ENCODE measurements at regions of chr6 and their contacts with region 1.

Region 1: GRCh38 chr6:151675746-151676416 is 131.6 kb upstream of the ESR1 start:
- DNase-seq: peak; percentile 74
- ATAC-seq: peak; percentile 79
- H3K4me3 Mint-ChIP-seq: no peak overlapping the region
- H3K27ac Mint-ChIP-seq: no peak overlapping the region
- H3K4me1 Mint-ChIP-seq: peaks cover 16% of the 10 kb centered on the region
- H3K27me3 Mint-ChIP-seq: no peaks in the 10 kb centered on the region

Region 2: DNA sequence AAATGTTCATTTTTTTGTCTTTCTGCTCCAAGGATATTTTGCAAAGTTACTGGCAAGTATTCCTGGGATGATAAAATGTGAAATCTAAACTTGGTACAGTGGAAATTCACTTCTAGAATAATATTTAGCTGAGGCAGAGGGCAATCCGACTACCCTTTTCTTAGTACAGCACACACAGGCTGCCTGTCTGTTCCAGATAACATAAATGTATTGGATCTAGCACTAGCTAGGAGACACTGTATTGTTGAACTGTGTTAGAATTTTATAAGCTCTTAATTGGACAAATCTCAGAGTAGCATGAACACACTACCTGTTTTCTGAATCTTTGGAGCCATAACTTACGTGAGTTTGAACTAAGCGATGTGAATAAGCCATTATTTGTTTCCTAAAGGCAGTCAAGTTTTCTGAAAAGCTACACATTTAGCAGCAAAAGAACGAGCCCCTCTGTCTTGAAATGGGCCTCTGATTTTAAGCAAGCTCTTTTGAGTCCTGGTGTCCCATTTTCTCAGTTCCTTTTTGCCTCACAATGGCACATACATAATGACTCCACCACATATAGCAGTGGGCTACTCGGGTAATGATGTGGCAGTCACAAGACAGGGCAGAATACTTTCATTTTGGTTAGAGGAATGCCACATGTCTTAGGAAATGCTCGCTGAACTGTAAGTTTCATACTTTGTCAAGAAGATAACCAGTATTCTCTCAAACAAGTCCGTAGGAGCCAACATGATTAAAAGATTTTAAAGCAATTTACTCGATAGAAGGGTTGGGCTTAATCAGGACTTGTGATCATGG is 15.1 kb after region 1 on chr6:
- CTCF ChIA-PET with region 1: interaction called, 18 read pairs
- POLR2A ChIA-PET with region 1: interaction called, 4 read pairs
- intact Hi-C with region 1: no loop called
- DNase-seq: peak; percentile 57
- ATAC-seq: peak; percentile 94
- H3K4me3 Mint-ChIP-seq: peak overlapping the region; percentile 66
- H3K27ac Mint-ChIP-seq: peak overlapping the region; percentile 82
- H3K4me1 Mint-ChIP-seq: peaks cover 22% of the 10 kb centered on the region
- H3K27me3 Mint-ChIP-seq: peaks cover 8% of the 10 kb centered on the region

Region 3: DNA sequence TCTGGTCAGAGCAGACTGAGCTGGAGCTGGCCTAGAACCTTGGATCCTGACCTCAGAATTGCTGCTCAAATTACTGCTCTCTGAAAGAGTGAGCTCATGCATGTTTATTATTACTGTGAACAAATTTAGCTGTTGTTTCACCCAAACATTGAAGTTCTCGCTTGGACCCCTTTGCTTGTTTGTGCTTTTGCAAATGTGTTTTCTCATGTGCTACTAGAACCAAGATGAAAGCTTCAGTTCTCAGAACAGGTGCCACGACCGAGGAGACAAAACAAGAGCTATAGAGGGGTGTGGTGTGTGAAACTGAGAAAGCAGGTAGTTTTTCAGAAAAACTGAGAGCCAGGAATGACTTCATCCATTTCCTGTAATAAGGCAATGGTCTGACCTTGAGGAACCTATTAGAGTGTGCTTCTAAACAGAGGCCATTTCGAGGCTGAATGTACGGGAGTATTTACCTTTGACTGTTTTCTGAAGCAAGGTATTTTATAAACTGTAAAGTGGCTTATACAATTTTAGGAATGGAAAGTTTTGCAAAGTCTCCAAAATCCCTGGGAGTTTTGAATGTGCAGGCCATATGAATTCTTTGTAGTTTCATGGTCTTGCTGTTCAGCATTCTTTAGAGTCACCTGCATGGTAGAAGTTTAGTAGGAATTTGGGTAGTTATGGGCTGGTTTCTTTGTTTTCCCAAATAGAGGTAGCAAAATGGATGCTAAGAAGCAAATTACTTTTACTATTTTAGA is 81.8 kb after region 1 on chr6:
- CTCF ChIA-PET with region 1: interaction called, 3 read pairs
- POLR2A ChIA-PET with region 1: no interaction called
- intact Hi-C with region 1: loop called (anchors 2 to 5 kb)
- DNase-seq: peak; percentile 62
- ATAC-seq: peak; percentile 90
- H3K4me3 Mint-ChIP-seq: no peak overlapping the region
- H3K27ac Mint-ChIP-seq: peak overlapping the region; percentile 82
- H3K4me1 Mint-ChIP-seq: peaks cover 25% of the 10 kb centered on the region
- H3K27me3 Mint-ChIP-seq: peaks cover 2% of the 10 kb centered on the region

Region 4: GRCh38 chr6:151962246-151962846 is 286.5 kb after region 1 on chr6:
- CTCF ChIA-PET with region 1: no interaction called
- POLR2A ChIA-PET with region 1: no interaction called
- intact Hi-C with region 1: loop called in 1 of 2 experiments (anchors 5 kb)
- DNase-seq: peak; percentile 16
- ATAC-seq: peak; percentile 72
- H3K4me3 Mint-ChIP-seq: no peak overlapping the region
- H3K27ac Mint-ChIP-seq: no peak overlapping the region
- H3K4me1 Mint-ChIP-seq: peaks cover 18% of the 10 kb centered on the region
- H3K27me3 Mint-ChIP-seq: peaks cover 27% of the 10 kb centered on the region

Region 5: DNA sequence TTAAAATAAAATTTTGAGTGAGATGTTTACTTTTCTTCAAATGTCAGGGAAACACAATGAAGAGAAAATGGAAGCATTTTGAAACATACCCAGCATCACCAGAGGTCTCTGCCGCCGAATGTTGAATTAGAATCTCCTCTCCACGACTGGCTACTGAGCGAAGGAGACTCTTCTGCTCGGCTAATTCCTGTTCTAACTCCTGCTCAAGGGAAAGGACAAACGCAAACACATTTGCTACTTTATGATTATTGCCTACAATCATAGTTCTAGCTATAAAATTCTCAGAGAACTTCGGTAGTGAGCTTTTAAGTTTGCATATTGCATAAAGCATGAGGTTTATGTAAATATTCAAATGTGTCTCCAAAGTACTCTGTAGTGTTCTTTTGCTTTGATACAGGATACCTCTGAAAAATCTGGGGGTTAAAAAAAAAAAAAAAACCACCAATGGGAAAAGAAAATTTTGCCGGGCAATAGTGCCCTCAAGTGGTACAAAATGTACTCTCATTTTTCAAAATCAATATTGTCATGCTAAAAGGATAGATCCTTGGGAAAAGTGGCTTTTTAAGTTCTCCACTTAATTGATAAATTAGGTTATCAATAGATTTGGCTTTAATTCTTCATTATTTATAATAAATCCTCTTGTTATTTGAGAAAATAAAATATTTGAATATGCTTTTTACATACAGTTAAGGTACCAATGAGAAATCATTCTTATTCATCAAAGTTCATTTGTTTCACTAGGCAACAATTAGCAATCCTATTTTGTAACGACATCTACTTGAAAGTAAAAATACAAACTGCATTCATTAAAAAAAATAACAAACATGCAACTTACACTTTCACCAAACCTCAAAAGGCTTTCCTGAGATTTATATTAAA is 592.3 kb after region 1 on chr6:
- CTCF ChIA-PET with region 1: interaction called, 10 read pairs
- POLR2A ChIA-PET with region 1: no interaction called
- intact Hi-C with region 1: loop called (anchors 1 kb)
- DNase-seq: peak; percentile 42
- ATAC-seq: no peak
- H3K4me3 Mint-ChIP-seq: no peak overlapping the region
- H3K27ac Mint-ChIP-seq: no peak overlapping the region
- H3K4me1 Mint-ChIP-seq: peaks cover 11% of the 10 kb centered on the region
- H3K27me3 Mint-ChIP-seq: no peaks in the 10 kb centered on the region